ENCODE measurements at regions of chr9 and their contacts with region 1.

Region 1: DNA sequence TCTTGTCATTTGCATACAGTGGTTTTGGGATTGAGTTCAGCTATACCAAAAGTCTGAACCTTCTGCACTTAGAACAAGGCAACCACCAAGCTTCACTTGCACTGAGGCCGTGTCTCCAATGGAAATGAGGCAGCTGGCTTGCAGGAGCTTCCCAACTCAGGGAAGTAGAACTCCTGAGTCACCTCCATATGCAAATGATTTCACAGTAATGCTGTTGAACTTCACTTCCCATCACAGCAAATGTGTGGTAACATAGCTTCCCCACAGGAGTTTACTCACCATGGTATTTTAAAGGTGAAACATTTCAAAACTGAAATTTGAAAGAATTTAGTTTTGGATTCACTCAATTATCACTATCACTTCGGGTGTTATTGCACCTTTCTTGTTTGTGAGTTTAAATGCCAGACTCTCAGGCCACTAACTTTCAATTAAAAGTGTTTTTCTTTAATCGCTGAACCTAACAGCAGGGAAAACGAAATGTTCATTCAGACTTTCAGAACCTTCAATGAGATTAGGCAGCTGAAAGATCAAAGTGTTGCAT is 9.0 kb downstream of the CD274 start:
- DNase-seq: peak; percentile 61
- H3K4me3 Mint-ChIP-seq: peak overlapping the region; percentile 57
- H3K27ac Mint-ChIP-seq: peak overlapping the region; percentile 84
- H3K4me1 Mint-ChIP-seq: peaks cover 65% of the 10 kb centered on the region
- H3K27me3 Mint-ChIP-seq: no peaks in the 10 kb centered on the region

Region 2: GRCh38 chr9:3868012-3868411 is 1591.3 kb before region 1 on chr9:
- CTCF ChIA-PET with region 1: no interaction called
- intact Hi-C with region 1: no loop called
- DNase-seq: peak; percentile 35
- H3K4me3 Mint-ChIP-seq: no peak overlapping the region
- H3K27ac Mint-ChIP-seq: no peak overlapping the region
- H3K4me1 Mint-ChIP-seq: peaks cover 8% of the 10 kb centered on the region
- H3K27me3 Mint-ChIP-seq: peaks cover 9% of the 10 kb centered on the region

Region 3: GRCh38 chr9:4750023-4750673 is 709.2 kb before region 1 on chr9:
- CTCF ChIA-PET with region 1: no interaction called
- intact Hi-C with region 1: loop called (anchors 1 kb)
- DNase-seq: no peak
- H3K4me3 Mint-ChIP-seq: no peak overlapping the region
- H3K27ac Mint-ChIP-seq: no peak overlapping the region
- H3K4me1 Mint-ChIP-seq: peaks cover 34% of the 10 kb centered on the region
- H3K27me3 Mint-ChIP-seq: no peaks in the 10 kb centered on the region

Region 4: DNA sequence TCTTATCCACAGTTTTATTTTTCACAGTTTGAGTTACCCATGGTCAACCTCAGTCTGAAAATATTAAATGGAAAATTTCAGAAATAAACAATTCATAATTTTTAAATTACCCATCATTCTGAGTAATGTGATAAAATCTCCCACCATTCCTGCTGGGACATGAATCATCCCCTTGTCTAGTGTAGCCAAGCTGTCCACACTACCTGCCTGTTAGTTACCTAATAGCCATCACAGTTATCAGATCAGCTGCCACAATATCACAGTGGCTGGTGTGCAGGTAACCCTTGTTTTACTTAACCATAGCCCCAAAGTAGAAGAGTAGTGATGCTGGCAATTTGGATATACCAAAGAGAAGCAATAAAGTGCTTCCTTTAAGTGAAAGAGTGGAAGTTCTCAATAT is 32.3 kb before region 1 on chr9:
- CTCF ChIA-PET with region 1: no interaction called
- intact Hi-C with region 1: no loop called
- DNase-seq: no peak
- H3K4me3 Mint-ChIP-seq: no peak overlapping the region
- H3K27ac Mint-ChIP-seq: no peak overlapping the region
- H3K4me1 Mint-ChIP-seq: peaks cover 6% of the 10 kb centered on the region
- H3K27me3 Mint-ChIP-seq: no peaks in the 10 kb centered on the region

Region 5: GRCh38 chr9:5437254-5438216 is 21.8 kb before region 1 on chr9 and contains the start of gene PLGRKT:
- CTCF ChIA-PET with region 1: interaction called, 4 read pairs
- intact Hi-C with region 1: loop called (anchors 1 kb)
- DNase-seq: peak; percentile 95
- H3K4me3 Mint-ChIP-seq: peak within 1 kb of the TSS; percentile 92
- H3K27ac Mint-ChIP-seq: peak within 1 kb of the TSS; percentile 98
- H3K4me1 Mint-ChIP-seq: peaks cover 51% of the 10 kb centered on the region
- H3K27me3 Mint-ChIP-seq: no peaks in the 10 kb centered on the region
- total RNA-seq, gene PLGRKT: 48.9 to 51.4 TPM

Region 6: DNA sequence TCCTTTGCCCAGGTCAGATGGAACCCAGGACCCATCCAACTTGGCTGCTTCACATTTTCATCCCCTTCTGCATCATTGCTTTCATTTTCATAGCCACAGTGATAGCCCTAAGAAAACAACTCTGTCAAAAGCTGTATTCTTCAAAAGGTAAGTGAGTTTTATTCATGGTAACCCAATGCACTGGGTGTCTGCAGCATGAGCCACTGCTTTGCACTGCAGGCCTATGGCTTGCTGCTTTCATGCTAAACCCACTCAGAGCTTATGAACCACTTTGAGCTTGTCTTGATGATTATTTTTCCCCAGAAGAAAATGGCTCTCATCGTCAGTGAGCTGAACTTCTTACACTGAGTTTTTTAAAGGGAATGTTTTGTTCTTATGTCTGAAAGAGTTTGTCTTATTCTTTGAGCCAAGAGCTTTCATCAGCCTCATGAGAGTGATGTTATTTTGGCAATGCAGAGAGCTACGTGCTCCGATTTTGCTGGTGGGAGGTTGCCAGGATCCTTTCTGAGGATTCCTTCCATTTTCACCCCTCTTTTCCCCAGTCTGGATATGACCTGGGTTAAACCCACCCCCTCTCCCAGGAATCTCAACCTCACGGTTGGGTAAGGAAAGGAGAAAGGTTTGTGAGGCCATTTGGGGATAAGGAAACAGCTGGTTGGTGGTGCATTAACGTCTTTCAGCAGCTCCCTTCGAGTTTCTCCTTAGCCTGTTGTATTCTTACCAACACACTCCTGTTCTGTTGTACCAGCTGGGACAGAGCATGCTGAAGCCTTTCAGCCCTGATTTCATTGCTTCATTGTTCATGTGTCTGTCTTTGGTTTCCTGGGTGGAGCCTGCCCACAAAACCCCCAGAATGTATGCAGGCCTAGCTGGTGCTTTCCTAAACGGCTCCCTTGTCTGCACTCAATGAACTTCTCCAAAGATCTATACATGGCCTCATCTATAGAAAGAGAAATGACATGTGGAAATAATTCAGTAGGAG is 98.5 kb after region 1 on chr9:
- CTCF ChIA-PET with region 1: no interaction called
- intact Hi-C with region 1: loop called (anchors 1 kb)
- DNase-seq: peak; percentile 76
- H3K4me3 Mint-ChIP-seq: no peak overlapping the region
- H3K27ac Mint-ChIP-seq: no peak overlapping the region
- H3K4me1 Mint-ChIP-seq: peaks cover 41% of the 10 kb centered on the region
- H3K27me3 Mint-ChIP-seq: no peaks in the 10 kb centered on the region

Region 7: GRCh38 chr9:5764130-5764868 is 304.9 kb after region 1 on chr9:
- CTCF ChIA-PET with region 1: no interaction called
- intact Hi-C with region 1: loop called (anchors 1 kb)
- DNase-seq: peak; percentile 55
- H3K4me3 Mint-ChIP-seq: no peak overlapping the region
- H3K27ac Mint-ChIP-seq: peak overlapping the region; percentile 83
- H3K4me1 Mint-ChIP-seq: peaks cover 72% of the 10 kb centered on the region
- H3K27me3 Mint-ChIP-seq: no peaks in the 10 kb centered on the region

Region 8: DNA sequence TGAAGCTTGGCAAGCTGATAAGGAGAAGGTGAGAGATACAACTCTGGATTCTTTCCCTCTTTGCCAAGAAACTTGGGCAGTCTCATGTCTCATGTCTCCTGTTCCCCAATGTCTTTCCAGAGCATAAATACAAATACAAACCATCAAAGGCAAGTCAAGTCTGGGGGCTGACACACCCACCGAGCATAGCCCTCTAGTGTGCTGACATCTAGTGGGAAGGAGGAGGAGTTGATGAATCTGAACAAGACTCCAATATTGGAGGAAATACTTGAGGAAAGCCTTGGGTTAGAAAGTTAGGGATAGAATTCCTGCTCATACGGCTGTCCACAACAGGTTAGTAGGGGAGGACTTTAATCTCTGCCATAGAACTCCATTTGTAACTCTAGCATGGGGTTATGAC is 439.9 kb after region 1 on chr9:
- CTCF ChIA-PET with region 1: no interaction called
- intact Hi-C with region 1: loop called (anchors 5 kb)
- DNase-seq: no peak
- H3K4me3 Mint-ChIP-seq: no peak overlapping the region
- H3K27ac Mint-ChIP-seq: peak overlapping the region; percentile 59
- H3K4me1 Mint-ChIP-seq: peaks cover 37% of the 10 kb centered on the region
- H3K27me3 Mint-ChIP-seq: no peaks in the 10 kb centered on the region